ENCODE measurements at regions of chr6 and their contacts with region 1.

Region 1: GRCh38 chr6:83067448-83068413 is at the start of gene DOP1A:
- DNase-seq: peak; percentile 97
- H3K4me3 ChIP-seq: peak within 1 kb of the TSS; percentile 88
- H3K27ac ChIP-seq: peak within 1 kb of the TSS; percentile 79
- H3K4me1 ChIP-seq: peaks cover 58% of the 10 kb centered on the region
- CTCF ChIP-seq: peak; percentile 95
- total RNA-seq, gene DOP1A: 21.4 and 25.6 TPM in 2 replicates

Region 2: GRCh38 chr6:81451787-81452186 is 1615.9 kb before region 1 on chr6:
- CTCF ChIA-PET with region 1: no interaction called
- POLR2A ChIA-PET with region 1: no interaction called
- intact Hi-C with region 1: no loop called
- DNase-seq: no peak
- H3K4me3 ChIP-seq: no peak overlapping the region
- H3K27ac ChIP-seq: no peak overlapping the region
- H3K4me1 ChIP-seq: no peaks in the 10 kb centered on the region
- CTCF ChIP-seq: no peak

Region 3: GRCh38 chr6:82247634-82248232 is 820.0 kb before region 1 on chr6 and contains the start of gene IBTK:
- CTCF ChIA-PET with region 1: no interaction called
- POLR2A ChIA-PET with region 1: interaction called, 10 read pairs
- intact Hi-C with region 1: loop called (anchors 5 kb)
- DNase-seq: peak; percentile 91
- H3K4me3 ChIP-seq: peak within 1 kb of the TSS; percentile 86
- H3K27ac ChIP-seq: peak within 1 kb of the TSS; percentile 40
- H3K4me1 ChIP-seq: peaks cover 26% of the 10 kb centered on the region
- CTCF ChIP-seq: no peak
- total RNA-seq, gene IBTK: 16.6 and 18.6 TPM in 2 replicates

Region 4: GRCh38 chr6:83192871-83193746 is 125.4 kb after region 1 on chr6 and contains the starts of genes PGM3 and RWDD2A:
- CTCF ChIA-PET with region 1: interaction called, 4 read pairs
- POLR2A ChIA-PET with region 1: interaction called, 30 read pairs
- intact Hi-C with region 1: loop called (anchors 1 kb)
- DNase-seq: peak; percentile 92
- H3K4me3 ChIP-seq: peak within 1 kb of the TSS; percentile 94
- H3K27ac ChIP-seq: no peak within 1 kb of the TSS
- H3K4me1 ChIP-seq: peaks cover 11% of the 10 kb centered on the region
- CTCF ChIP-seq: no peak
- total RNA-seq, gene PGM3: 17.5 and 18.6 TPM in 2 replicates
- total RNA-seq, gene RWDD2A: 2.2 and 2.9 TPM in 2 replicates

Region 5: DNA sequence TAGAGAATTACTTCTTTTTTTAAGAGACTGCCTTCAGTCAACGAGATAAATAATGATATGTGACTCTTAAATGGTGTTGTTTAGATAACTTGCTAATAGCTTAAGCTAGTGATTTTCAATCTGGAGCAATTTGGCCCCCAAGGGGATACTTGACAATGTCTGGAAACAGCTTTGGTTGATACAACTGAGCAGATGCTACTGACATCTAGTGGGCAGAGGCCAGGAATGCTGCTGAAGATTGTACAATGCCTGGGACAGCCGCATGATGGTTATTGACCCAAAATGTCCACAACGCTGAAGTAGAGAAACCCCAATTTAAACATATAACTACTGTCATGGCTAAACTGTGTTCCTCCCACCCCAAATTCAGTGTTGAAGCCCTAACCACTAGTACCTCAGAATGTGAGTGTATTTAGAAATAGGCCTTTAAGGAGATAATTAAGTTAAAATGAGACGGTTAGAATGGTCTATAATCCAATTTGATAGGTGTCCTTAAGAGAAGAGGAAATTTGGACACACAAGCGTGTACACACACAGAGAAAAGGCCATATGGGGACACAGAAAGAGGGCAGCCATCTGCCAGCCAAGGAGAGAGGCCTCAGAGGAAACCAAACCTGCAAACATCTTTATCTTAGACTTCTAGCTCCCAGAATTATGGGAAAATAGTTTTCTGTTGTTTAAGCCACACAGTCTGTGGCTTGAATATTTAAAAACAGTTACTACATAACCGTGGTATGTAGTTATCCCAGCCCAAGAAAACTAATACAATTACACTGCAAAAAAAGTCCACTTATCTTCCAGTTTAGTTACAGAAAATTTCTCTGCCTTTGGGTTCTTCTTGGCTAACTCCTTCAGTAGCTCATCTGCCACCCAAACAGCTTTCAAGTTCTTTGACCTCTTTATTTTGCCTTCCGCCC is 147.7 kb after region 1 on chr6:
- CTCF ChIA-PET with region 1: interaction called, 15 read pairs
- POLR2A ChIA-PET with region 1: interaction called, 32 read pairs
- intact Hi-C with region 1: loop called (anchors 1 kb)
- DNase-seq: peak; percentile 81
- H3K4me3 ChIP-seq: no peak overlapping the region
- H3K27ac ChIP-seq: no peak overlapping the region
- H3K4me1 ChIP-seq: no peaks in the 10 kb centered on the region
- CTCF ChIP-seq: peak; percentile 94

Region 6: GRCh38 chr6:83514866-83515466 is 447.2 kb after region 1 on chr6:
- CTCF ChIA-PET with region 1: interaction called, 7 read pairs
- POLR2A ChIA-PET with region 1: interaction called, 4 read pairs
- intact Hi-C with region 1: loop called (anchors 2 kb)
- DNase-seq: peak; percentile 50
- H3K4me3 ChIP-seq: no peak overlapping the region
- H3K27ac ChIP-seq: no peak overlapping the region
- H3K4me1 ChIP-seq: no peaks in the 10 kb centered on the region
- CTCF ChIP-seq: peak; percentile 91

Region 7: GRCh38 chr6:83859410-83860358 is 792.0 kb after region 1 on chr6 and contains the start of gene CYB5R4:
- CTCF ChIA-PET with region 1: no interaction called
- POLR2A ChIA-PET with region 1: no interaction called
- intact Hi-C with region 1: loop called (anchors 5 kb)
- DNase-seq: peak; percentile 94
- H3K4me3 ChIP-seq: peak within 1 kb of the TSS; percentile 89
- H3K27ac ChIP-seq: peak within 1 kb of the TSS; percentile 20
- H3K4me1 ChIP-seq: peaks cover 33% of the 10 kb centered on the region
- CTCF ChIP-seq: peak; percentile 55
- total RNA-seq, gene CYB5R4: 15.7 and 16.2 TPM in 2 replicates

Region 8: DNA sequence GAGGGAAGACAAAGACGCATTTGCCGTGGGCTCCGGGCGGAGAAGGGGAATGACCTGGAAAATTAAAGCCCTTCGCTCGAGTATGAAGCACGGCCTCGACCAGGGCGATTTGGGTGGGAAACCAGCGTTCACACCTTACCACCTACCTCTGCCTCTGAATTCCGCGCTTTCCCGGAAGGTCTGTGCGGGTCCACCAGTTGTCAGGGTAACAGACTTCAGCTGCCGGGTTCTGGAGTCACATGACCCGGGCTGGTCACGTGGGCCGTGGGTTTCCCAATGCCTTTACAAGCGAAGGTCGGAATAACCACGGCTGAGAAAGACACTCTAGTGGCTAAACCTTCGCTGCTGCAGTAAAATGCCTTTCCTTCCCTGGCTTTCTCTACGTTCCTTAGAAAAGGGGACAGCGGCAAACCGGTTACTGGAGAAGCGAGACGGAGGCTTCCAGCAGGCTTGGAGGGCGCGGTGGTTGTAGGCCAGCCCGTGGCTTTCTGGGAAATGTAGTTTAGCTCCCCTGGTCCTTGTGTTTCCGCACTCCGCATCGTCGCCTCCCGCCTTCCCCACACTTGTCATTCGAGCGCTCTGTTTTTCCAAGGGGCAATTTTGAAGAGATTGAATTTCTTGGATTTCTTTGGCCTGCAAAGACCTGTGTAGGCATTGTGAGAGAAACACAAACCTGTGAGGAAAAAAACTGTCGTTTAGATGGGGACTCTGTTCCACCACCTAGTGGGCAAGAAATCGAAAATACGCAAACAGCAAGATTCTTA is 1159.9 kb after region 1 on chr6 and contains the start of gene CEP162:
- CTCF ChIA-PET with region 1: no interaction called
- POLR2A ChIA-PET with region 1: no interaction called
- intact Hi-C with region 1: loop called (anchors 2 kb)
- DNase-seq: peak; percentile 90
- H3K4me3 ChIP-seq: peak within 1 kb of the TSS; percentile 93
- H3K27ac ChIP-seq: peak within 1 kb of the TSS; percentile 26
- H3K4me1 ChIP-seq: peaks cover 9% of the 10 kb centered on the region
- CTCF ChIP-seq: peak; percentile 89
- total RNA-seq, gene CEP162: 6.3 and 8.9 TPM in 2 replicates

Measured in OCI-LY7 (cell line).